ENCODE measurements at regions of chr3 and their contacts with region 1.

Region 1: GRCh38 chr3:26712211-26713026 is 89.8 kb downstream of the LRRC3B start:
- DNase-seq: no peak
- ATAC-seq: peak; percentile 60

Region 2: DNA sequence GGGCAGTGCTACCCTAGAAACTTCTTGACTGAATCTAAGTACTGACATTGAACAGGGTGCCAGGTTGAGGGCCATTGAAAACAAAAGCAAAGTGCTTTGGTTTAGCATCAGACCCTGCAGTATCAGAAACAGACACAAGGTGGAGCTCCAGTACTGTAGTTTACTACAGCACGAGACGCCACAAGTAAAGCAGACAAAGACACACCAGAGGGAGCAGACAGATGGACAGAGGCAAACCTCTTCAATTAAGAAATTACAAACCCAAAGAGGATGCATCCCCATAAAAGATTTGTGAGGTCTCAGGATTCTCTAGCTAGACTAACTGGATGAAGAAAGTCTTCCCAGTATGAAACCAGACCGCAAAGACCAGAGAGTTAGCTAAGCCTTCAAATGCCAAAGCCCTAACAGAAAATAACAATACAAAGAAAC is 1064.3 kb before region 1 on chr3:
- intact Hi-C with region 1: loop called (anchors 10 kb)
- DNase-seq: no peak
- ATAC-seq: peak; percentile 91

Region 3: DNA sequence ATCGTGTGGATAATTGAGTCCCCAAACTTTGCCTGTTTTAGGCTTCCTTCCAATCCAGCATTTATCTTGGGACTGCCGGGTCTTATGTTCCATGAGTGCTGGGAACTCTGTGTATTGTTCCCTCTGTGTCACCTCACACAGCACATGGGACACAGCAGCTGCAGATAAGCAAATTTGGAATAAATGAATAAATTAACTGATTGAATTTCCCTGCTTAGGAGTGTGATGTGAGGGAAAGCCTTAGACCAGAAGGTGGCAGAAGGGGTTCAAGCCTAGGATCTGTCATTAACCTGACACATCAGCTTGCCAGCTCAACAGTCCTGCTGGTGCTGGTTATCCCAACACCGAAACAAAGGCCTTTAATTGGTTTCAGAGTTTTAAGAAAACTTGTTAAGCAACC is 808.2 kb before region 1 on chr3:
- intact Hi-C with region 1: loop called (anchors 5 kb)
- DNase-seq: no peak
- ATAC-seq: peak; percentile 82

Region 4: GRCh38 chr3:26193558-26193957 is 518.9 kb before region 1 on chr3:
- intact Hi-C with region 1: no loop called
- DNase-seq: no peak
- ATAC-seq: no peak

Region 5: DNA sequence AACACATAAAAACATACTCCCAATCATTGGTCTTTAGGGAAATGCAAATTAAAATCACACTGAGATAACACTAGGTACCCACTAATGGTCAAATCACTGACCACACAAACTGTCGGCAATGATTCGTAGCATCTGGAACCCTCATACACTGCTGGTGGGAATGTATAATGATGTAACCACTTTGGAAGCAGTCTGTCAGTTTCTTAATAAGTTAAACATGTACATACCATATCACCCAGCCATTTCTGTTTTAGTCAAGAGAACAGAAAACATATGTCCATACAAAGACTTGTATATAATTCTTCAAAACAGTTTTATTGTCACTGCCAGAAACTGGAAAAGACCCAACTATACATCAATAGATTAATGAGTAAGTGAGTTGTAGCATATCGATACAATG is 153.2 kb before region 1 on chr3:
- intact Hi-C with region 1: no loop called
- DNase-seq: no peak
- ATAC-seq: no peak